Transverse colon (tissue), 4 donors: ENCODE measurements at regions of chr2 and their contacts with region 1.

Region 1: GRCh38 chr2:40935349-40935748 is 483.5 kb upstream of the SLC8A1 start:
- DNase-seq: no peak
- H3K4me3 ChIP-seq: no peak overlapping the region
- H3K27ac ChIP-seq: no peak overlapping the region
- H3K4me1 ChIP-seq: no peaks in the 10 kb centered on the region
- H3K27me3 ChIP-seq: no peaks in the 10 kb centered on the region
- CTCF ChIP-seq: no peak
- EP300 ChIP-seq: no peak
- POLR2A ChIP-seq: no peak

Region 2: GRCh38 chr2:42464631-42465030 is 1529.3 kb after region 1 on chr2:
- in situ Hi-C with region 1: no loop called
- intact Hi-C with region 1: loop called (anchors 10 kb)
- DNase-seq: no peak
- H3K4me3 ChIP-seq: no peak overlapping the region
- H3K27ac ChIP-seq: no peak overlapping the region
- H3K4me1 ChIP-seq: no peaks in the 10 kb centered on the region
- H3K27me3 ChIP-seq: no peaks in the 10 kb centered on the region
- CTCF ChIP-seq: no peak
- EP300 ChIP-seq: no peak
- POLR2A ChIP-seq: no peak

Region 3: DNA sequence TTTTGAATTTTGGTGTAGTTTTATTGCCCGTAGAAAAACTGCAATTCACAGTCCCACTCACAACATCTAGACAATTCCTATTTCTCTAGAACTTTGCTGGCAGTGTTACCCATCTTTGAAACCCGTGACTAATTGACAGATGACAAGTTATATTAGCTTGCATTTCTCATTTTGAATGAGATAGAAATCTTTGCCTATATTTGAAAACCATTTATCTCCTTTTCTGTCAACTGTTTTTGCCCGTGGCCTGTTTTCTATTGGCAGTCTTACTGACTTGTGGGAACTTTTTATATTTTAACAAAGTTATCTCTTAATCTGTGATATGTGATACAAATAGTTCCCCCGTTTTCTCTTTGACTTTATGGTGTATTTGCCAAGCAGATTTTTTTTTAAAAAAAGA is 1778.6 kb after region 1 on chr2:
- in situ Hi-C with region 1: no loop called
- intact Hi-C with region 1: no loop called
- DNase-seq: no peak
- H3K4me3 ChIP-seq: no peak overlapping the region
- H3K27ac ChIP-seq: no peak overlapping the region
- H3K4me1 ChIP-seq: no peaks in the 10 kb centered on the region
- H3K27me3 ChIP-seq: no peaks in the 10 kb centered on the region
- CTCF ChIP-seq: no peak
- EP300 ChIP-seq: no peak
- POLR2A ChIP-seq: no peak